ENCODE measurements at regions of chr11 and their contacts with region 1.

Region 1: DNA sequence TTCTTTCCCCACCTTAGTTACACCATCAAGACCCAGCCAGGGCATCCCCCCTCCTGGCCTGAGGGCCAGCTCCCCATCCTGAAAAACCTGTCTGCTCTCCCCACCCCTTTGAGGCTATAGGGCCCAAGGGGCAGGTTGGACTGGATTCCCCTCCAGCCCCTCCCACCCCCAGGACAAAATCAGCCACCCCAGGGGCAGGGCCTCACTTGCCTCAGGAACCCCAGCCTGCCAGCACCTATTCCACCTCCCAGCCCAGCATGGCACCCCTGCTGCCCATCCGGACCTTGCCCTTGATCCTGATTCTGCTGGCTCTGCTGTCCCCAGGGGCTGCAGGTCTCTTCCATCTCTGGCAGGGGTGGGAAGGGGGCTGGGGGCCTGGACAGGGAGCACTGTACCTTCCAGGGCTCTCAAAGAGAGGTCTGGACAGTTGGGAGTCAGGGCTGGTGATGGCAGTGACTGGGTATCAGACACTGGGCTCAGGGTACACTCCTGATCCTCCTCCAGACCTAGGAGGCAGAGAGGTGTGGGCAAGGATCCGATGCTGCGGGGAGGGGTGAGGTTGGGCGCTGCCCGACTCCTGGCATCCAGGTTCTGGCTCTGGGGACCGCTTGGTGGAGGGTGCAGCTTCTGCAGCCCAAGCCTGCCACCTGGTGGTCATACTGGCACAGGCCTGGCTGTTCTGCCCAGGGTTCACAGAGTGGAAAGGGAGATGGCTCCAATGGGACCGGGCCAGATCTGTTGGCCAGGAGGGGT is at the start of gene UPK2:
- DNase-seq: peak; percentile 96
- H3K4me3 Mint-ChIP-seq: no peak within 1 kb of the TSS
- H3K27ac Mint-ChIP-seq: no peak within 1 kb of the TSS
- H3K4me1 Mint-ChIP-seq: peaks cover 4% of the 10 kb centered on the region
- H3K27me3 Mint-ChIP-seq: peaks cover 26% of the 10 kb centered on the region
- total RNA-seq, gene UPK2: not detected in 2 replicates

Region 2: GRCh38 chr11:118689851-118690552 is 266.3 kb before region 1 on chr11:
- intact Hi-C with region 1: loop called (anchors 1 kb)
- DNase-seq: peak; percentile 94
- H3K4me3 Mint-ChIP-seq: peak overlapping the region; percentile 79
- H3K27ac Mint-ChIP-seq: peak overlapping the region; percentile 60
- H3K4me1 Mint-ChIP-seq: peaks cover 27% of the 10 kb centered on the region
- H3K27me3 Mint-ChIP-seq: peaks cover 12% of the 10 kb centered on the region

Measured in activated CD4-positive, alpha-beta T cell treated with anti-CD3 and anti-CD28 coated beads, Interleukin-2, amount 10 ng/mL, durations not matched to agents 24 days and 14 days (primary cell).